Endothelial cell of umbilical vein (primary cell): ENCODE measurements at regions of chr4 and their contacts with region 1.

Region 1: GRCh38 chr4:52925531-52925968 is 63.4 kb downstream of the RASL11B start:
- DNase-seq: no peak
- H3K4me3 ChIP-seq: no peak overlapping the region
- H3K27ac ChIP-seq: no peak overlapping the region
- H3K4me1 ChIP-seq: no peaks in the 10 kb centered on the region
- H3K27me3 ChIP-seq: no peaks in the 10 kb centered on the region
- CTCF ChIP-seq: no peak
- POLR2A ChIP-seq: no peak

Region 2: DNA sequence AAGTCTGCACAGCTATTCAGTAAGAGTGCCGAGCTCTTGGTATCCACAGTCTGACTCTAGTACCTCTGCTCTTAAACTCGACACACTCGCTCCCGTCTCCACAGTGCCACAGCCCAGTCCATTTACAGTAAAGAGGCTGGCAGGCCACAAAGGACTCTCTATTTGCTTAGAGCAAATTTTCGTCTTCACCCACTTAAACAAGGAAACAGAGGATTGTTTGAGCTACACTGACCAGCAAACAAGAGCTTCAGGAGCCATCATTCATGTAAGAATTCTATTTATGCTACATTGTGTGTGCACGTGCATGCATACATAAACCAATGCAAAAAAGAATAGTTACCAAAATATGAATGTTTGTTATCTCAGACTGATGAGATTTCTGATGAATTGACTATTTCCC is 556.7 kb before region 1 on chr4:
- CTCF ChIA-PET with region 1: no interaction called
- POLR2A ChIA-PET with region 1: no interaction called
- dilution Hi-C with region 1: no loop called
- intact Hi-C with region 1: no loop called
- DNase-seq: no peak
- H3K4me3 ChIP-seq: no peak overlapping the region
- H3K27ac ChIP-seq: no peak overlapping the region
- H3K4me1 ChIP-seq: no peaks in the 10 kb centered on the region
- H3K27me3 ChIP-seq: peaks cover 0 to 2% of the 10 kb centered on the region in 2 experiments
- CTCF ChIP-seq: no peak
- POLR2A ChIP-seq: no peak

Region 3: DNA sequence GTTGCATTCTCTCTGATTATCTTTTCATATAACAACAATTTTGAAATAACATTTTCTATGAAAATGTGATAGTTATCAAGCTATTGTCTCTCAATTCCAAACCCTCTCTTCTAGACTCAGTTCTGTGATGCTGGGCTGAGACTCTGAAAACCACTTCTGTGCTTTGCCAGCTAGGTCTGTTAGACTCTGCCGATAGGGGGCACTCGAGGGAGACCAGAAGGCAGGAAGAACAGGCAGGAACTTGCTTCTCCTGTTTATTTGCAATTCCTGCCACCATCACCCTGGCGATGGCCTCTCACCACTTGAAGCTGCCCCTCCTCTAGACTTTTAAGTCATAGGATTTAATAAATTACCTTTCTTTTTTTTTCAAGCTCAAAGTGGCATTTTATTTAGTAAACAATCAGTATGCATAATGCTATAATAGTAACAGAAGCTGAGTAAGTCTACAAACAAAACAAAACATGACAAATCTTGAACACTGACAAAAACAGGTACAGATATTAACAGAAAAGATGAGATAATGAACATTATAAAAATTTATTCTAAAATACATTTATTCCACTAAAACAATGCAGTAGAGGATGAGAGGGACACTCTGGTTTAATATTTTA is 13.8 kb before region 1 on chr4:
- CTCF ChIA-PET with region 1: interaction called, 12 read pairs
- POLR2A ChIA-PET with region 1: no interaction called
- dilution Hi-C with region 1: no loop called
- intact Hi-C with region 1: no loop called
- DNase-seq: peak; percentile 76
- H3K4me3 ChIP-seq: no peak overlapping the region
- H3K27ac ChIP-seq: no peak overlapping the region
- H3K4me1 ChIP-seq: no peaks in the 10 kb centered on the region
- H3K27me3 ChIP-seq: no peaks in the 10 kb centered on the region
- CTCF ChIP-seq: peak; percentile 85 to 89
- POLR2A ChIP-seq: no peak